Naive thymus-derived CD4-positive, alpha-beta T cell (primary cell): ENCODE measurements at regions of chr13 and their contacts with region 1.

Region 1: DNA sequence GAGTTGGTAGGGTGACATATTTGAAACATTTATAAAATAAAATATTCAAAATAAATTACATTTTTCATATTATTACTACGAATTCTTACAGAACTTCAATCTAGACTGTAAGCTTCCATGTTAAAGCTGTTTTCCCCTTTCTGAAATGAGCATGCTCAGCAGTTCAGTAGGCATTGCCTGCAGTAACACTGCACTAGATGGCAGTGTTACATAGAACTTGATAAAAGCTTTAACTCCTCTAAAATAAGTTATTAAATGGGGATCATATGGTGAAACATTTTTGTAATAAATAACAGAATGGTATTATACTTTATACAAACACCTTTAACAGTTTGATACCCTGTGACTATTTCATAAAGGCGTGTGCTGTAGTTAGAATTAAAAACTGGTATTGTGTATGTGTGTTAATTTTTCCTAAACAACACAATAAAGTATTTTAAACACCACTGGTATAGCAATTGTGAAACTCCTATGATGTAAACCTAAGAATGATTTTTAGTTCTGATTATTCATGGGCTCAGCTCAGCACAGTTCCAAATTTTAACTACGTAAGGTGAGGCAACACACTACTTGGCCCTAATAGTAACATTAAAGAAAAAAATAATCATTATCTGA is 11.6 kb upstream of the GPR18 start:
- DNase-seq: peak in 7 of 9 donors; percentile 51 to 71 (median 58)
- ATAC-seq: peak; percentile 84
- H3K4me3 ChIP-seq: no peak overlapping the region
- H3K4me3 Mint-ChIP-seq: peak overlapping the region in 1 of 10 donors; percentile 52
- H3K27ac ChIP-seq: peak overlapping the region; percentile 46
- H3K27ac Mint-ChIP-seq: peak overlapping the region in 8 of 9 donors; percentile 63 to 94 (median 92)
- H3K4me1 ChIP-seq: peaks cover 38 to 54% of the 10 kb centered on the region in 2 donors
- H3K4me1 Mint-ChIP-seq: peaks cover 35 to 73% (median 65%) of the 10 kb centered on the region in 7 donors
- H3K27me3 ChIP-seq: no peaks in the 10 kb centered on the region
- H3K27me3 Mint-ChIP-seq: no peaks in the 10 kb centered on the region

Region 2: GRCh38 chr13:99062593-99062992 is 207.1 kb before region 1 on chr13:
- CTCF ChIA-PET with region 1: no interaction called
- POLR2A ChIA-PET with region 1: no interaction called
- intact Hi-C with region 1: no loop called
- DNase-seq: no peak
- ATAC-seq: no peak
- H3K4me3 ChIP-seq: no peak overlapping the region
- H3K4me3 Mint-ChIP-seq: peak overlapping the region in 8 of 10 donors; percentile 12 to 60 (median 28)
- H3K27ac ChIP-seq: no peak overlapping the region
- H3K27ac Mint-ChIP-seq: peak overlapping the region in 6 of 9 donors; percentile 19 to 86 (median 66)
- H3K4me1 ChIP-seq: peaks cover 14 to 73% of the 10 kb centered on the region in 2 donors
- H3K4me1 Mint-ChIP-seq: peaks cover 56 to 99% (median 95%) of the 10 kb centered on the region in 7 donors
- H3K27me3 ChIP-seq: no peaks in the 10 kb centered on the region
- H3K27me3 Mint-ChIP-seq: peaks cover 0 to 22% (median 0%) of the 10 kb centered on the region in 5 donors

Region 3: GRCh38 chr13:99176309-99177276 is 93.1 kb before region 1 on chr13:
- CTCF ChIA-PET with region 1: interaction called, 232 read pairs
- POLR2A ChIA-PET with region 1: interaction called, 23 read pairs
- intact Hi-C with region 1: loop called (anchors 1 kb)
- DNase-seq: peak; percentile 54 to 79 (median 71)
- ATAC-seq: peak; percentile 95
- H3K4me3 ChIP-seq: peak overlapping the region; percentile 1
- H3K4me3 Mint-ChIP-seq: peak overlapping the region; percentile 39 to 81 (median 72)
- H3K27ac ChIP-seq: no peak overlapping the region
- H3K27ac Mint-ChIP-seq: peak overlapping the region in 8 of 9 donors; percentile 34 to 77 (median 54)
- H3K4me1 ChIP-seq: peaks cover 22 to 24% of the 10 kb centered on the region in 2 donors
- H3K4me1 Mint-ChIP-seq: peaks cover 26 to 44% (median 39%) of the 10 kb centered on the region in 7 donors
- H3K27me3 ChIP-seq: no peaks in the 10 kb centered on the region
- H3K27me3 Mint-ChIP-seq: peaks cover 0 to 13% (median 0%) of the 10 kb centered on the region in 5 donors

Region 4: DNA sequence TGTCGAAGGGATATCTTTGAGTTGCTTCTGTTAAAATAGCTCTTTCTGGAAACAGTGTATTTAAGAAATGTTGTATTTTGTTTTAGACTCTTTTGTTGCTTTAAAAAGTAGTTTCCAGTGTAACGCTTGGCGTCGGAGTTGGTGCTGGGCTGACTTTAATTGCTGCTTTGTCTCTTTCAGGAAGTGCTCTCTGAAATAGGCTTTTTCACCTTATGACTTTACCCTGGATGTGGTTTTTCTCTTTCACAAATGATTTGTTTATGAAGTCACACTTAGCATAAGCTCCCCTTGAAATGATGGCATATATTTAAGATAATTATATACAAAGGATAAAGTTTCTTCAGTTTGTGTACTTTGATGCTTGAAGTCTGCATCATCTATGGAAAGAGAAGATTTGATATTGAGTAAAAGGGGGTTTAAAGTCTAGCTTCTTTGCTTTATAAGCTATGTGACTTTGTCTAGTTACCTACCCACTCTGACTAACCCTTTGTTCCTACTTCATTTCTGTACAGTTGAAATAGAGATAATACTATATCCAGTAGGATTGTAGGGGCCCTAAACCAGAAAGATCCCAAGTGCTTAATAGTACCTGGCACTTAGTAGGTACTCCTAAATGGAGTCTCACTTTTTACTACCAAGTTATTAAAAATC is 11.4 kb before region 1 on chr13 and contains the start of gene GPR18:
- CTCF ChIA-PET with region 1: interaction called, 17 read pairs
- POLR2A ChIA-PET with region 1: interaction called, 4 read pairs
- intact Hi-C with region 1: loop called in 1 of 2 experiments (anchors 1 kb)
- DNase-seq: peak in 7 of 9 donors; percentile 56 to 81 (median 70)
- ATAC-seq: peak; percentile 89
- H3K4me3 ChIP-seq: peak within 1 kb of the TSS; percentile 86
- H3K4me3 Mint-ChIP-seq: peak within 1 kb of the TSS; percentile 86 to 99 (median 94)
- H3K27ac ChIP-seq: peak within 1 kb of the TSS; percentile 81
- H3K27ac Mint-ChIP-seq: peak within 1 kb of the TSS; percentile 90 to 97 (median 95)
- H3K4me1 ChIP-seq: peaks cover 27 to 40% of the 10 kb centered on the region in 2 donors
- H3K4me1 Mint-ChIP-seq: peaks cover 30 to 80% (median 66%) of the 10 kb centered on the region in 7 donors
- H3K27me3 ChIP-seq: no peaks in the 10 kb centered on the region
- H3K27me3 Mint-ChIP-seq: no peaks in the 10 kb centered on the region
- total RNA-seq, gene GPR18: 11.5 to 40.4 (median 21.1) TPM

Region 5: DNA sequence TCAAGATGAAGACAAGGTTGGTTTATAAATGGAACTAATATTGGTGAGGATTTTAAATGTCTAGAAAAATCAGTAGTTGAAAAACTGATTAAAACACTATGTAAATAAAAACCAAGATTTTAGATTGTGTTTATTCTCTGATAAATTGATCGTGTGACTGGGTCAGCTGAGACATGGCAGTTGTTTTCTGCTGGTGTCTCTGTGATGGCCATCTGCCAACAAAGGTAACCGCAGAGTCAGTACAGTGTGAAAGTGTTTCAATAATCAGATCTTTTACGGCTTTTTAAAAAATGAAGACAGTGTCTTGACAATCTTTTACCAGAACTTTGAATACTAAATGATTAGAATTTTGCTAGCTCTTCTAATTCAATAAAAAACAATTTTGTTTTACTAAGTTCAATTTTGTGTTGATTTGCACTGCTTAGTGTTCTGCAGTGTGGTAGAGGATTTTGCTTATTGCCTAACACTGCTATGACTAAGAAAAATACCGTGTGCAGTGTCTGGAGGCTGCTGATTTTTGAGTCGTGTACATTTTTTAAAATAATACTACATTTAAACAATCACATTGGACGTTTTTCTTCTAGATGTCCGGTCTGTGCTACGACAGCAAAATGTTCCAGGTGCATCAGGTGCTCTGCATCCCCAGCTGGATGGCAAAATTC is 70.1 kb after region 1 on chr13:
- CTCF ChIA-PET with region 1: interaction called, 10 read pairs
- POLR2A ChIA-PET with region 1: interaction called, 8 read pairs
- intact Hi-C with region 1: no loop called
- DNase-seq: peak in 6 of 9 donors; percentile 32 to 56 (median 49)
- ATAC-seq: peak; percentile 76
- H3K4me3 ChIP-seq: peak overlapping the region; percentile 42
- H3K4me3 Mint-ChIP-seq: peak overlapping the region in 9 of 10 donors; percentile 23 to 79 (median 65)
- H3K27ac ChIP-seq: peak overlapping the region; percentile 41
- H3K27ac Mint-ChIP-seq: peak overlapping the region in 8 of 9 donors; percentile 46 to 96 (median 88)
- H3K4me1 ChIP-seq: peaks cover 39 to 41% of the 10 kb centered on the region in 2 donors
- H3K4me1 Mint-ChIP-seq: peaks cover 47 to 96% (median 82%) of the 10 kb centered on the region in 7 donors
- H3K27me3 ChIP-seq: no peaks in the 10 kb centered on the region
- H3K27me3 Mint-ChIP-seq: no peaks in the 10 kb centered on the region

Region 6: GRCh38 chr13:99380921-99381645 is 111.3 kb after region 1 on chr13:
- CTCF ChIA-PET with region 1: interaction called, 78 read pairs
- POLR2A ChIA-PET with region 1: interaction called, 44 read pairs
- intact Hi-C with region 1: loop called in 1 of 2 experiments (anchors 1 kb)
- DNase-seq: peak in 8 of 9 donors; percentile 55 to 73 (median 62)
- ATAC-seq: peak; percentile 51
- H3K4me3 ChIP-seq: peak overlapping the region; percentile 1
- H3K4me3 Mint-ChIP-seq: peak overlapping the region; percentile 63 to 85 (median 76)
- H3K27ac ChIP-seq: peak overlapping the region; percentile 85
- H3K27ac Mint-ChIP-seq: peak overlapping the region; percentile 94 to 99 (median 98)
- H3K4me1 ChIP-seq: peaks cover 77 to 88% of the 10 kb centered on the region in 2 donors
- H3K4me1 Mint-ChIP-seq: peaks cover 48 to 100% (median 98%) of the 10 kb centered on the region in 7 donors
- H3K27me3 ChIP-seq: no peaks in the 10 kb centered on the region
- H3K27me3 Mint-ChIP-seq: no peaks in the 10 kb centered on the region

Region 7: GRCh38 chr13:99528547-99528946 is 258.8 kb after region 1 on chr13:
- CTCF ChIA-PET with region 1: no interaction called
- POLR2A ChIA-PET with region 1: no interaction called
- intact Hi-C with region 1: no loop called
- DNase-seq: peak in 6 of 9 donors; percentile 9 to 57 (median 48)
- ATAC-seq: peak; percentile 68
- H3K4me3 ChIP-seq: no peak overlapping the region
- H3K4me3 Mint-ChIP-seq: peak overlapping the region in 2 of 10 donors; percentile 12 to 25
- H3K27ac ChIP-seq: no peak overlapping the region
- H3K27ac Mint-ChIP-seq: no peak overlapping the region
- H3K4me1 ChIP-seq: peaks cover 8 to 17% of the 10 kb centered on the region in 2 donors
- H3K4me1 Mint-ChIP-seq: peaks cover 33 to 63% (median 47%) of the 10 kb centered on the region in 7 donors
- H3K27me3 ChIP-seq: no peaks in the 10 kb centered on the region
- H3K27me3 Mint-ChIP-seq: no peaks in the 10 kb centered on the region

Region 8: DNA sequence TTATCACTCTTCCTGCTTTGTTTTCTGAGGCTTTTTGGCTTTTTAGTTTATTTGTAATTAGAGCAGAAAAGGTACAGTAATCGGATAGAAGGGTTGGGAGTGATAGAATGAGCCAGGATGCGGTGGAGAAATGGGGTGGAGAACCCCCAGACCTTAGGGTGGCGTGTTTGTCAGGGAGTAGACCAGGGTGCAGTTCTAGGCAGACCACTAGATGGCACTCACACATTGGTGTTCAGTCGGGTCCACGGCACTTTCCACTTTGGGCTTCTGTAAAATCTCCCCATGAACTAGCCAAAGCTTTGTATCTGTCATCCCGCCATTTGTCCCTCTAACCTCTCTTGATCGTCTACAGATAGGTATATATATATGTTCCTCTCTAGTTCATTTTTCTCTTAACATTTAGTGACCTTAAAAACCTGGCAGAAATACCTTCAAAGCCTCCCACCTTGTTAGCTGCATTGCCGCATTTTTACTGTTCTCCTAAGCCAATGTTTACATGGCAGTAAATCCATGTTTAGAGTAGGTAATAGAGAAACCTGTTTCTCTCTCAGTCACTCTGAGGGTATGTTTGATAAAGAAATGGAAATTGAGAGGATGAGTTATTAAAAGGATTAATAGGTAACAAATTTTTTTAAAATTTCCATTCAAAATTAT is 386.5 kb after region 1 on chr13:
- CTCF ChIA-PET with region 1: no interaction called
- POLR2A ChIA-PET with region 1: no interaction called
- intact Hi-C with region 1: loop called in 1 of 2 experiments (anchors 2 kb)
- DNase-seq: peak; percentile 58 to 84 (median 80)
- ATAC-seq: peak; percentile 89
- H3K4me3 ChIP-seq: peak overlapping the region; percentile 47
- H3K4me3 Mint-ChIP-seq: peak overlapping the region; percentile 73 to 90 (median 81)
- H3K27ac ChIP-seq: peak overlapping the region; percentile 82
- H3K27ac Mint-ChIP-seq: peak overlapping the region; percentile 47 to 98 (median 92)
- H3K4me1 ChIP-seq: peaks cover 39 to 41% of the 10 kb centered on the region in 2 donors
- H3K4me1 Mint-ChIP-seq: peaks cover 14 to 54% (median 45%) of the 10 kb centered on the region in 7 donors
- H3K27me3 ChIP-seq: no peaks in the 10 kb centered on the region
- H3K27me3 Mint-ChIP-seq: peaks cover 0 to 27% (median 0%) of the 10 kb centered on the region in 5 donors